ENCODE measurements at regions of chr5 and their contacts with region 1.

Region 1: GRCh38 chr5:39906146-39906545 is 481.4 kb upstream of the DAB2 start:
- DNase-seq: no peak
- H3K4me3 ChIP-seq: no peak overlapping the region
- H3K27ac ChIP-seq: no peak overlapping the region
- H3K4me1 ChIP-seq: peaks cover 5% of the 10 kb centered on the region
- H3K27me3 ChIP-seq: no peaks in the 10 kb centered on the region
- CTCF ChIP-seq: no peak
- POLR2A ChIP-seq: no peak

Region 2: DNA sequence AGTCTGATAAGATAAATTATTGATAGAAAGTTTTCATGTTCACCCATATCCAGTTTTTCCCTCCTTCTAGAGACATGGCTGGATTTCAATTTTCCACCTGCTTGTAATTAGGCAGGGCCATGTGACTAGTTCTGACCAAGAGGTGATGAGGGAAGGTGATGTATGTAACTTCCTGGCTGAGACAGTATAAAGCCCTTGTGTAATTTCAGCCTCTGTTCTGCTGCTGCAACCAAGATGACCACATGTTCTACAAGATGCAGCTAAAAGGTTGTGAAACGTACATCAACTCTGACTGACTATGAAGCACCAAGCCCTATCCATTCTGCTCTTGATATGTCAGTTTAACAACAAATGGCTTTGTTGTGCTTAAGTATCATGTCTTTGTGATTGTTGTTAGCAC is 104.8 kb before region 1 on chr5:
- CTCF ChIA-PET with region 1: no interaction called
- POLR2A ChIA-PET with region 1: no interaction called
- dilution Hi-C with region 1: no loop called
- intact Hi-C with region 1: no loop called
- DNase-seq: no peak
- H3K4me3 ChIP-seq: no peak overlapping the region
- H3K27ac ChIP-seq: no peak overlapping the region
- H3K4me1 ChIP-seq: no peaks in the 10 kb centered on the region
- H3K27me3 ChIP-seq: peaks cover 0 to 3% of the 10 kb centered on the region in 2 experiments
- CTCF ChIP-seq: no peak
- POLR2A ChIP-seq: no peak

Region 3: DNA sequence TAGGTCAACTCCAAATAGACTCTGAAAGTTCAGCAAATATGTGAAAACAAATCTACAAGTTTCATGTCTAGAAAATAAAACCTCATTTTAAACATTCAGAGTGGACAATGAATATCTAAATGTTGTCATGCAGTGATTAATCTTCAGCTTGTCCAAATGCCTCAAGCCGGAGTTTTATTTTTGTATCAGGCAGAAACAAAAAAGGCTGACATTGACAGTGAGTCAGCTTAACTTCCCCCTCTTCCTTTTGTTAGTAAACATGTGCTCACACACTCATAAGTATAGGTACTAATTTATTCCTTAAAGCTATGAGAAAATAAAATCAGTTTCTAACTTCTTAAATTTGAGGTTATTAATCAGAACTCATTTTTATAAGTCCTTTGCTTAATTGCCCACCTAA is 13.4 kb before region 1 on chr5:
- CTCF ChIA-PET with region 1: interaction called, 11 read pairs
- POLR2A ChIA-PET with region 1: no interaction called
- dilution Hi-C with region 1: no loop called
- intact Hi-C with region 1: no loop called
- DNase-seq: peak; percentile 69
- H3K4me3 ChIP-seq: no peak overlapping the region
- H3K27ac ChIP-seq: no peak overlapping the region
- H3K4me1 ChIP-seq: peaks cover 5% of the 10 kb centered on the region
- H3K27me3 ChIP-seq: no peaks in the 10 kb centered on the region
- CTCF ChIP-seq: no peak
- POLR2A ChIP-seq: no peak